Posterior cingulate gyrus (tissue), 11 donors: ENCODE measurements at regions of chr17 and their contacts with region 1.

Region 1: GRCh38 chr17:64129764-64130558 is at the start of gene ERN1:
- DNase-seq: peak; percentile 88 to 99 (median 94)

Region 2: GRCh38 chr17:63919311-63919723 is 210.6 kb before region 1 on chr17:
- intact Hi-C with region 1: loop called (anchors 5 kb)
- DNase-seq: peak in 7 of 10 donors; percentile 18 to 82 (median 44)

Region 3: GRCh38 chr17:64025732-64026294 is 104.1 kb before region 1 on chr17:
- intact Hi-C with region 1: loop called (anchors 1 kb)
- DNase-seq: peak in 8 of 10 donors; percentile 24 to 86 (median 44)

Region 4: DNA sequence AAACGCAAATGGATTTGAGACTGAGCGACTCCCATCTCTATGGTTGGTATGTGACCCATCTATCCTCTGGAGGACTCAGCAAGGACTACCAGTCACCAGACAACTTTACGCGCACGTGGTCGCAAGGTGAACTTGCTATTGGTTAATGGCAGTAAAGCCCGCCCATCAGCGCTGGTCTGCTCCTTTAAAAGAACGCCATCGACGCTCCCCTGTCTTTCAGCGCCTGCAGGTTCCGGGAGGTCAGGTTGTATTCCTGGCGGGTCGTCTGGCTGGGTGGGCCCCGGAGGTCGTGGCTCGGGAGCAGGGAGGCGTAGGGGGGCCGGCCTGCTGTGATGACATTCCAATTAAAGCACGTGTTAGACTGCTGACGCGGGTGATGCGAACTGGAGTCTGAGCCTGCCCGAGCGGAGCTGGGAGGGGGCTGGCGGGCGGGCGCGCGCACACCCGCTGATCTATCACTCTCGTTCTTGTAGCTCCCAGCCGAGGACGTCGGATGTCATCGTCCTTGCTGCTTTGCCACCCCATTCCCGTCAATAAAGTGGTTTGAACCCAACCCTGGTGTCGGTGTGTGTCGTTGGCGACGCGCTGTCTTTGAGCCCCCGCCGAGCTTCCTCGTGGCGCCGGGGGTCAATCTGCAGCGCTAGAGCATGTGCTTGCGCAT is 15.9 kb after region 1 on chr17:
- intact Hi-C with region 1: loop called (anchors 1 kb)
- DNase-seq: peak; percentile 96 to 100 (median 99)

Region 5: GRCh38 chr17:64262417-64263260 is 132.7 kb after region 1 on chr17 and contains the start of gene TEX2:
- intact Hi-C with region 1: loop called (anchors 5 kb)
- DNase-seq: peak; percentile 27 to 93 (median 43)

Region 6: GRCh38 chr17:64281962-64282727 is 152.2 kb after region 1 on chr17:
- intact Hi-C with region 1: loop called (anchors 5 kb)
- DNase-seq: peak in 8 of 10 donors; percentile 21 to 91 (median 49)